ENCODE measurements at regions of chr11 and their contacts with region 1.

Region 1: DNA sequence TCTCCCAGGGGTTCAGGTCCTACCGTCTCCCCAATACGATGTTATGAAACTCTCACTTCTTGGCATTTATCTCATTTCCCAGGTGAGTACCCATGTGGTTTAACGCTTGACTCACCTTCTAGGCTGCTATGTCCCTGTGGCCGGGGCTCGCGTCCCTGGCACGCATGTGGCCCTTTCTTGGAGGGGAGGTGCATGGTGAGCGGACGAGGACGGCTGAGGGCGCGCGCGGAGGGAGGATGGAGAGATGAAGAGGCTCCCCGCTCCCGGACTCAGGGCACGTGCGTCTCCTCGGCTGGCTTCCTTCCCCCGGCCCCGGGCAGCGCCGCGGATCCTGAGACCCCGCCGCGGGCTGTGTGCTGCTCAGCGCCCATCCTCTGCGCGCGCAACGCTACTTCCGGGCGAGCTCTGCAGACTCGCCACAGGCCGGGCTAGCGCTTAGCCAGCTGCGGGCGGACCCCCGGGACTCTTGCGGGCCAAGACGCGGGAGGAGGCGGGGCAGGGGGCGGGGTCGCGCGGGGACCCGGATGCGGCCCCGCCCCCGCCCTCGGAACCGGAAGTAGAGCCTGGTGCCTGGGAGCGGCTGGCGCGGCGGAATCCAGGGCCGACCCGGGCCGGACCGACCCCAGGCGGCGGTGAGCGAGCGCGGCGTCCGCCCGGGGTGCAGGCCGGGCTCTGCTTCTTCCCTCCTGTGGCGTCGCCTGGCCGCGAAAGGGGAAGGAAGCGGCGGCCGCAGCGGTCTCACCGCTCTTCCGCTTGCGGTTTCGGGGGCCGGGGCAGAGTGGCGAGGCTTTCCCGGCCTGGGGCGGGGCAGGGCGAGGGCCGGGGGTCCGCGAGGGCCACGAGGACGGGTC is at the start of gene CTTN:
- DNase-seq: peak; percentile 16 to 91
- H3K4me3 ChIP-seq: peak within 1 kb of the TSS; percentile 87 to 91
- H3K27ac ChIP-seq: peak within 1 kb of the TSS; percentile 94
- H3K4me1 ChIP-seq: peaks cover 9 to 23% of the 10 kb centered on the region in 2 donors
- H3K27me3 ChIP-seq: no peaks in the 10 kb centered on the region
- CTCF ChIP-seq: no peak
- total RNA-seq, gene CTTN: 166 TPM

Region 2: GRCh38 chr11:70202898-70203748 is 195.1 kb before region 1 on chr11 and contains the start of gene FADD:
- intact Hi-C with region 1: loop called (anchors 5 kb)
- DNase-seq: peak; percentile 60 to 95
- H3K4me3 ChIP-seq: peak within 1 kb of the TSS; percentile 78 to 97
- H3K27ac ChIP-seq: peak within 1 kb of the TSS; percentile 82 to 94
- H3K4me1 ChIP-seq: peaks cover 5 to 18% of the 10 kb centered on the region in 2 donors
- H3K27me3 ChIP-seq: no peaks in the 10 kb centered on the region
- CTCF ChIP-seq: no peak
- total RNA-seq, gene FADD: 22.2 TPM

Region 3: GRCh38 chr11:70270104-70270876 is 127.9 kb before region 1 on chr11 and contains the start of gene PPFIA1:
- intact Hi-C with region 1: loop called (anchors 1 kb)
- DNase-seq: peak; percentile 74 to 97
- H3K4me3 ChIP-seq: peak within 1 kb of the TSS; percentile 88 to 98
- H3K27ac ChIP-seq: peak within 1 kb of the TSS; percentile 77 to 79
- H3K4me1 ChIP-seq: peaks cover 5 to 15% of the 10 kb centered on the region in 2 donors
- H3K27me3 ChIP-seq: no peaks in the 10 kb centered on the region
- CTCF ChIP-seq: peak in 1 of 3 experiments; percentile 14
- total RNA-seq, gene PPFIA1: 29.3 TPM

Region 4: GRCh38 chr11:70358753-70359152 is 39.5 kb before region 1 on chr11:
- intact Hi-C with region 1: loop called (anchors 1 kb)
- DNase-seq: no peak
- H3K4me3 ChIP-seq: no peak overlapping the region
- H3K27ac ChIP-seq: peak overlapping the region in 1 of 2 donors; percentile 67
- H3K4me1 ChIP-seq: peaks cover 4 to 13% of the 10 kb centered on the region in 2 donors
- H3K27me3 ChIP-seq: no peaks in the 10 kb centered on the region
- CTCF ChIP-seq: no peak

Region 5: GRCh38 chr11:70381872-70382861 is 16.0 kb before region 1 on chr11:
- intact Hi-C with region 1: no loop called
- DNase-seq: peak in 1 of 2 donors; percentile 56
- H3K4me3 ChIP-seq: no peak overlapping the region
- H3K27ac ChIP-seq: peak overlapping the region in 1 of 2 donors; percentile 23
- H3K4me1 ChIP-seq: peaks cover 0 to 3% of the 10 kb centered on the region in 2 donors
- H3K27me3 ChIP-seq: no peaks in the 10 kb centered on the region
- CTCF ChIP-seq: peak in 1 of 3 experiments; percentile 21